ENCODE measurements at regions of chr12 and their contacts with region 1.

Region 1: DNA sequence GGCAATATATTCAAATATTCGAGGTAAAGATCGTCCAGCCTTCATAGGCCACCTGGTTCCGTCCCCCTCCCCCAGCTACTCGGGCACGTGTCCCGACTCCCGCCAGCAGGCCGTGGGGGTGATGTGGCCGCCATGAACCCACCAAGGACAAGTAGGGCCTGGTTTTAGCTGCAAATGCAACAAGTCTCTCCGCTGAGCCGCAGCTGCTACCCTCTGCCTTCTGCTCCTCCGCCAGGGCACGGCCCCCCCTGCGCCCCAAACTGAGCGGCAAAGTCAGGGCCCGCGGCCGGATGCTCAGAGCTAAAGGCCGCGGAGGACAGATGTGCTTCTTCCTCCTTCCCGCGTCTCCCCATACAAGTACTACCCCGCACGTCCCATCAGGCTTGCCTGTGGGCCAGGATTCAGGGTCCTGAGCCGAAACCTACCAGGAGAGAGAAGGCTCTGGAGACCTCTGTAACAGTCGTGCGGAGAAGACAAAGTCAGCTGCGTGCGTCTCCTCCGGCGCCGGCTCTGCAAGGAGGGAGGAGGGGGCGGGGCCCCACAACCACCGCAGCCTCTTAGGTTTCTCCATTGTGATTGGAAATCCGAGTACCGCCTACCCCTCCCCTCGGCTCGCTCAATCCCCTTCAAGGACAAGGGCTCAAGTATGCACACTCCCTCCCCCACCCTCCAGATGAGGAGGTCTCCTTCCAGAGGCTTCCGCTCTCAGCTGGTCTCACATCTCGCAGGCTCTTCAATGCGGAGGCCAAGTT is at the start of gene LDHB:
- DNase-seq: peak; percentile 97
- ATAC-seq: peak; percentile 99 to 100
- total RNA-seq, gene LDHB: 1,145 to 1,293 TPM

Region 2: DNA sequence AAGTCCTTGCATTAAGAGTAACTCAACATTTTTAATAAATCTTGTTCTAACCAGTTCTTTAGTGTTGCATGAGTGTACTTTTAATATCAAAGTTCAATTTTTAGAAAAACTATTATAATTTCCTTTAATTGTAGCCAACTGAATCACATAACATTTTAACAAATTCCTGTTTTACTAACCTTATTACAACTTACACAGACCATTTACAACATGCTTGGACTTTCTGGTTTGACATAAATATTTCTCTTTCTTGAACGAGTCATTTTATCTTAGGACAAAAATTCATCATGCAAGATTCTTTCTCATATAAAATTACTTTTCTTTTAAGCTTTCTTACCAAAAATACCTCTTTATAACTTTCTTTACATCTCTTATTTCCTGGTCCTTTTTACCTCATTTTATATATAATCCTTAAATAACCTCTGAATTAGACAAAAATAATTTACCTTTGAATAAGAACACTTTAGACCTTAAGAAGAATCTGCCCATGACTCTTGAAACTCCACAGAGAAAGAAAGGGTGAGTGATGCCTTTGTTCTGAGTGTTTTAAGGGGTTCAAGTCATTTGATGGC is 326.7 kb before region 1 on chr12:
- intact Hi-C with region 1: no loop called
- DNase-seq: no peak
- ATAC-seq: no peak

Region 3: DNA sequence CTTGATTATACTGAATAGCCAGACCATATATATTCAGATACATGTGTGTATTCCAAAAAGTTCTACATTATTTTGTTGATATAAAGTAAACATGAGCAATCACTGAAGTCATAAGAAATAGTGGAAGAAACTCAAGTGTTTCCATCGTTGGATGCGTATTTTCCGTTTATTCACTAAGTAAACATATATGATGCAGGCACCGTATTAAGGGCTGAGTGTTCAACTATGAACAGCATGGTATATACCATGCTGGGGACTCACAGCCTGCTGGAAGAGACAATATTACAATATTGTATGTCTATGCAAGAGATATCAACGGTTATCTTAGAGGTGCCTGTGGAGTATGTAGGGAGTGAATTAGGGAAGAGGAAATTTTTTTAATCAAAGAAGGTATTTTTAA is 218.9 kb before region 1 on chr12:
- intact Hi-C with region 1: loop called in 1 of 2 experiments (anchors 5 kb)
- DNase-seq: no peak
- ATAC-seq: no peak

Region 4: DNA sequence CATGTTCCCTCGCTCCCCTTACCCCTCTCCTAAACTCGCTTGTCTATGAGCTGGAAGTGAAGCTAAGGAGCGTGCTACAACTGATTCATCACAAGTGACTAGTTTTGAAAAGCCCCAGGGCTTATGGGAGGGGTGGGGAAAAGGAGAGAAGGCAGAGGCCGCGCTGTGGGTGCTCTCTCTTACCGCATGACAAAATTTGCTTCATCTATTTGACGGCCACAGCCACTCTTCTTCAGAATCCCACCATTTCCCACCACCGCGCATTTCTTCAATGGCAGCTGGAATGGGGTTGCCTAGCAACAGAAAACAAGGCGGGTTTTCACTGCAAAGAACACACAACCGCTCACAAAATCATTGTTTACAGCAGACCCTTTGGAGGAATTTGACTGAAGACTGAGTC is 597.6 kb after region 1 on chr12:
- intact Hi-C with region 1: no loop called
- DNase-seq: no peak
- ATAC-seq: peak; percentile 30

Measured in left cardiac atrium (tissue), 4 donors.